GM12878 (cell line): ENCODE measurements at regions of chr9 and their contacts with region 1.

Region 1: GRCh38 chr9:69891696-69892095 is 71.1 kb downstream of the CFAP95 start:
- DNase-seq: no peak
- ATAC-seq: no peak
- H3K4me3 ChIP-seq: no peak overlapping the region
- H3K27ac ChIP-seq: no peak overlapping the region
- H3K4me1 ChIP-seq: no peaks in the 10 kb centered on the region
- H3K27me3 ChIP-seq: no peaks in the 10 kb centered on the region
- CTCF ChIP-seq: no peak
- EP300 ChIP-seq: no peak
- POLR2A ChIP-seq: no peak
- RAD21 ChIP-seq: no peak

Region 2: DNA sequence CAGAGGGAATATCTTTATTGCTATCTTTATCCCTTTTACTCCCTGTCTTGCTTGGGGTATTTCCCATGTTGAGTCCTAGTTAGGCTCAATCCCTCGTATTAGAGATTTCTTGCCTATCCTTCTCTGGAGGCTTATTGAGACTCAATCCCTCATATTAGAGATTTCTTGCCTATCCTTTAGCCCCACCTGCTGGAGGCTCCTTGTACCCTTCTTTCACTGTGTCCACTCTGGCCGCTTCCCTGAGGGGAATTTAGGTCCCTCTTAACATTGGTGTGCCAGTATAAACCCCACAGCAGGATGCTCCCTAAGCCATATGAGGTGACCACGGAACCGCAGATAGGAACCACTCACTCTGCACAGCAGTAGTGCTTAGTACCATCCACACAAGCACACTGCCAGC is 41.2 kb after region 1 on chr9:
- CTCF ChIA-PET with region 1: interaction called, 4 read pairs
- POLR2A ChIA-PET with region 1: no interaction called
- RAD21 ChIA-PET with region 1: no interaction called
- SMC1A ChIA-PET with region 1: no interaction called
- in situ Hi-C with region 1: loop called (anchors 5 kb)
- intact Hi-C with region 1: no loop called
- DNase-seq: no peak
- ATAC-seq: peak; percentile 64
- H3K4me3 ChIP-seq: no peak overlapping the region
- H3K27ac ChIP-seq: no peak overlapping the region
- H3K4me1 ChIP-seq: no peaks in the 10 kb centered on the region
- H3K27me3 ChIP-seq: no peaks in the 10 kb centered on the region
- CTCF ChIP-seq: peak; percentile 16 to 35 (median 28); a peak in 4 of 6 replicates
- EP300 ChIP-seq: no peak
- POLR2A ChIP-seq: no peak
- RAD21 ChIP-seq: peak; percentile 24; the same call in 1 of the 2 replicates

Region 3: GRCh38 chr9:69981686-69982450 is 90.2 kb after region 1 on chr9:
- CTCF ChIA-PET with region 1: no interaction called
- POLR2A ChIA-PET with region 1: no interaction called
- RAD21 ChIA-PET with region 1: no interaction called
- SMC1A ChIA-PET with region 1: no interaction called
- in situ Hi-C with region 1: no loop called
- intact Hi-C with region 1: no loop called
- DNase-seq: no peak
- ATAC-seq: no peak
- H3K4me3 ChIP-seq: no peak overlapping the region
- H3K27ac ChIP-seq: no peak overlapping the region
- H3K4me1 ChIP-seq: no peaks in the 10 kb centered on the region
- H3K27me3 ChIP-seq: no peaks in the 10 kb centered on the region
- CTCF ChIP-seq: no peak
- EP300 ChIP-seq: no peak
- POLR2A ChIP-seq: no peak
- RAD21 ChIP-seq: no peak